Activated CD4-positive, alpha-beta memory T cell treated with anti-CD3 and anti-CD28 coated beads for 36 hours (primary cell): ENCODE measurements at regions of chr21 and their contacts with region 1.

Region 1: GRCh38 chr21:42009831-42010523 is at the start of gene ZBTB21:
- DNase-seq: peak; percentile 99
- H3K4me3 Mint-ChIP-seq: peak within 1 kb of the TSS; percentile 88
- H3K27ac Mint-ChIP-seq: peak within 1 kb of the TSS; percentile 99
- H3K4me1 Mint-ChIP-seq: peaks cover 27% of the 10 kb centered on the region
- H3K27me3 Mint-ChIP-seq: no peaks in the 10 kb centered on the region
- total RNA-seq, gene ZBTB21: 23.6 to 24.1 TPM

Region 2: GRCh38 chr21:42400525-42400924 is 390.5 kb after region 1 on chr21:
- CTCF ChIA-PET with region 1: no interaction called
- POLR2A ChIA-PET with region 1: no interaction called
- intact Hi-C with region 1: loop called (anchors 10 kb)
- DNase-seq: peak; percentile 55
- H3K4me3 Mint-ChIP-seq: peak overlapping the region; percentile 49
- H3K27ac Mint-ChIP-seq: peak overlapping the region; percentile 77
- H3K4me1 Mint-ChIP-seq: peaks cover 50% of the 10 kb centered on the region
- H3K27me3 Mint-ChIP-seq: no peaks in the 10 kb centered on the region